Mucosa of descending colon (tissue), 3 donors: ENCODE measurements at regions of chr10 and their contacts with region 1.

Region 1: DNA sequence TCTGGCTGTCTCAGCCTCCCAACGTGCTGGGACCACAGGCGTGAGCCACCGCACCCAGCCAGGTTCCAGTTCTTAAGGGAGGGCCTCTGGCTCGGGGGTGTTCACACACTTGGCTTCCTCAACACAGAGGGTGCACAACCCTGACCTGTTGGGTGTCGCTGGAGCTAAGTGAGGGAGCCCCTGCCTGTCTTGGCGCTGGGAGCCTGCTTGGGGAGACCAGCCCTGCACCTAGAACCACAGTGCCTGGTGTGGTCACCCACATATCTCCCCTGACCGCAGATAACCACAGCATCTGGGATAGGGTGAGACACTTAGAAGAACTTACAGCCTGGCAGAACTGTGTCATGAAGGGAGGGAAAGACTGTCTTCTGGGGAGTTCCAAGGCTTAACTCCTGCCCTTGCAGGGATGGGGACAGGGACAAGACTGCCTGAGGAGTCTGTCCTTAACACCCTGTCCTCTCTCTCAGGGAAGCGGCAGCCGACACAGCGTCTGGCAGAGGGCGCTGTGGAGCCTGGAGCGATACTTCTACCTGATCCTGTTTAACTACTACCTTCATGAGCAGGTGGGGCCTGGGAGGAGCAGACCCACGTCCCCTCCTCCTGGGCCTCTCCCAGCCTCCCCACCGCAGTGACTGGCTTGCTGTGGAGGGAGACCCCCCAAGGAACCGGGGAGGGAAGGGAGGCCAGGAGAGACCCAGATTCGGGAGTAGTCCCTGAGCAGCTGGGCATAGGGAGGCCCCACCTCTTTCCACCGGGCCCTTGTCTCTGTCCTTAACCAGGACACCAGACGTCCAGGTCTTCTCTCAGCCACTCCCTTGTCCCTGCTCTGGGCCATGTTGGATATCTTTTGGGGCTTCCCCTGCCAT is 59.0 kb downstream of the PALD1 start:
- DNase-seq: peak in 2 of 3 donors; percentile 71 to 73
- ATAC-seq: peak; percentile 76
- H3K4me3 ChIP-seq: no peak overlapping the region
- H3K4me1 ChIP-seq: no peaks in the 10 kb centered on the region
- CTCF ChIP-seq: peak; percentile 19

Region 2: DNA sequence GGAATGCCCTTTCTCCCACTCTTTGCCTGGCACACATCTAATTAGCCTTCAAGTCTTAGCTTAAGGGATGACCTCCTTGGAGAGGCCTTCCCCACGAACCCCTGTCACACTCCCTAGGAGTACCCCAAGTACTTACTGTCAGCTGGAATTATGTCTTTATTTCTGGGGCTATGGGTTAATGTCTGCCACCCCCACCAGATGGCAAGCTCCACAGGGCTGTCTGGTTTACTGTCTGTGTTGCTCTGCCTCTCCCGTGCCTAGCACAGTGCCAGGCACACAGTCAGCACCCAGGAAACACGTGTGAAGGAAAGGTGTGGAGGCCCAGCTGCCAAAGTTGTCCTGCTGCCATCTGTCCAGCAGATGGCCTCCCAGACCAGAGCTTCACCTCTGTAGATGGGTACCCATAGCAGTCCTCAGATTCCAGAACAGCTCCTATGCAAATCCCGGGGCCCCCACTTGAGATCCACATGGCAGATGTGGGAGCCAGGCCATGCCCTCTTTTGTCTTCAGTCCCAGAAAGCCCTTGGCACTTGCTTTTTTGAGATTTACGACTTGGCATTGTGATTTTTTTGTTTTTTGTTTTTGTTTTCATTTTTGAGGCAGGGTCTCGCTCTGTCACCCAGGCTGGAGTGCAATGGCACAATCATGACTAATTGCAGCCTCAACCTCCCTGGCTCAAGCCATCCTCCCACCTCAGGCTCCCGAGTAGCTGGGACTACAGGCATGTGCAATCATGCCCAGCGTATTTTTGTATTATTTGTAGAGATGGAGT is 76.2 kb before region 1 on chr10:
- intact Hi-C with region 1: loop called (anchors 5 to 10 kb)
- DNase-seq: peak in 2 of 3 donors; percentile 65 to 70
- ATAC-seq: peak; percentile 75
- H3K4me3 ChIP-seq: no peak overlapping the region
- H3K4me1 ChIP-seq: peaks cover 7% of the 10 kb centered on the region
- CTCF ChIP-seq: peak; percentile 76